ENCODE measurements at regions of chr2 and their contacts with region 1.

Region 1: DNA sequence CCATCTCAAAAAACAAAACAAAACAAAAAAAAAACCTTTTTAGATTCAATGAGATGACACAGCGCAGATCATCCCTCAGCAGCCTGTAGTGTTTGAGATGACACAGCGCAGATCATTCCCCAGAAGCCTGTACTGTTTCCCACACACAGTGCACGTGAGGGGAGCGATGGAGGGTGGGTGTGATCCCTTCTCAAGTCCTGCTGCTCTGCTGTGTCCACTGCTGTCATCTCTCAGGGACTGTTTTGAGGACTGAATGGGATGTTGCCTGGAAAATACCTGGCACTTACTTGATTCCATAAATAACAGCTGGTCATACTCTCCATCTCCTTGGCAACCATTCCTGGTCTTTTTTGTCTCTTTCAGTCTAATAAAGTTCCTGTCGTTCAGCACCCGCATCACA is 25.7 kb downstream of the TGOLN2 start:
- H3K4me3 ChIP-seq: no peak overlapping the region
- H3K27ac ChIP-seq: no peak overlapping the region
- H3K4me1 ChIP-seq: no peaks in the 10 kb centered on the region
- CTCF ChIP-seq: no peak

Region 2: DNA sequence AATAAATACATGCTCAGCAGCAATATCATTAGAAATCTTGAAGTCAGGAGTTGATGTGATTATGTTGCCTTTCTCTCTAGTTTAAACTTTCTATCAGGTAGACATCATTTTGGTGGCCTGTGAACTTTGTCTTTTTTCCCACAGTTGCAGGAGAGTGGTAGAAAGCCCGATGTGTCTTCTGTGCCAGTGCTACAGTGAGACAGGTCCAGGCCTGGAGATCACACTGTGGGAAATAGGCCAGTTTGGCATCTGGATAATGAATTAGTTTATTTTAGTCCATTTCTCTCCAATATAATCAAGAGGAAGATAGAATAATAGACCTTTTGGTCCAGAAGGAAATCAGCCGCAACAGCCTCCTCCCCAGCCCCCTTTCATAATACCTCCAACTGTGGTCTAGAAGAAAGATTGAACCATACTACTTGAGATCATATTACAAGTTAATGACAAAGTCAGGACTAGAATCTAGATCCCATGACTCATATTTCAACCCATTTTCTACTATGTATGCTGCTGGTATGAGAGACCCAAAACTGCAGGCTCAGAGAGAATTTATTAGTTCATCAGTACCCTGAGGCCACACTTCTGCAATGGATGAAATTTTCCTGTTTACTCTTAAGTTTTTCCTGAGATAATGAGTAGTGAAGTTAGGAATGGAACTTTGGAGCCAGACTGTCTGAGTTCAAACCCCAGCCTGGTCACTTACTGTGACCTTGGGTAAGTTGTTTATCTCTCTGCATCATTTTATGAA is 310.5 kb before region 1 on chr2:
- CTCF ChIA-PET with region 1: interaction called, 10 read pairs
- POLR2A ChIA-PET with region 1: no interaction called
- H3K4me3 ChIP-seq: no peak overlapping the region
- H3K27ac ChIP-seq: peak overlapping the region; percentile 3; the same call in 1 of the 2 replicates
- H3K4me1 ChIP-seq: peaks cover 30% of the 10 kb centered on the region
- CTCF ChIP-seq: no peak

Region 3: GRCh38 chr2:85273738-85274731 is 28.1 kb before region 1 on chr2:
- CTCF ChIA-PET with region 1: interaction called, 42 read pairs
- POLR2A ChIA-PET with region 1: no interaction called
- H3K4me3 ChIP-seq: no peak overlapping the region
- H3K27ac ChIP-seq: no peak overlapping the region
- H3K4me1 ChIP-seq: 0 out of 2 replicates have a peak, but pooled peaks cover 3% of the 10 kb centered on the region
- CTCF ChIP-seq: no peak

Region 4: DNA sequence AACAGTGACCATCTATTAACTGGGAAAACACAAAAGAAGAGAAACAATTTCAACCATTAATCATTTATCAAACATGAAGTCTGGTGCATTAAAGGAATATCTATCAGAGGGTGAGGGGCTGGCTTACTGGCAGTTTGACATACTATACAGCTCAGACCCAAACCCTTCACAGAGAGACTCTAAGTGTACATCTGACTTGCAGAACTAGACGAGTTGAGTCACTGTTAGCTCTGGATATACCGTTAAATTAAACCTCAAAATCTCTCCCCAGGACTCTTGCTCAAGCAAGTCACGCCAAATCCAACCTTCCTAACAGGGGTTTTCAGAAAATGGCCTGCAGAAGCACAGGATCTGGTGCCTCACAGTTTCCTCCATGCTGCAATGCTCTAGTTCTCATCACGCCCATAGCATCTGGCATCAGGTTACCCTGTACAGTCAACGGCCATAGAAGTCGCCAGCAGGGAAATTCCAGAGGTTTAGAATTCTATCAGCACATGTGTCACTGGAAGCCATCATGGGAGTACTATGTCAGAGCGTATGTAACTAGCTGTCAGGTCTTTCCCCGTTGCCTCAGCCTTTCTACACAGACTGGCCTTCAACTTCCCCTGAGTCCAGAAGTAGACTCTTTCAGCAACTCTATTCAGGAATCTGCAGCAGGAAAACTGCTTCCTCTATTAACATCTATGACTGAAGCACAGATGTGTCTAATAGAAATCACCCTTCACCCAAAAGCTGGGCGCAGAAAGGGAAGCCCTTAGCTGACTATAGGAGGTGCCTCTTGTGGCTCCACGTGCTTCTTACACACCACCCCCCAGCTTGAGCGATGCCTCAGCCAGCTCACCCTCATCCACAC is 16.3 kb after region 1 on chr2:
- CTCF ChIA-PET with region 1: interaction called, 14 read pairs
- POLR2A ChIA-PET with region 1: interaction called, 3 read pairs
- H3K4me3 ChIP-seq: no peak overlapping the region
- H3K27ac ChIP-seq: no peak overlapping the region
- H3K4me1 ChIP-seq: no peaks in the 10 kb centered on the region
- CTCF ChIP-seq: no peak

Region 5: GRCh38 chr2:85561317-85561979 is 259.3 kb after region 1 on chr2 and contains the start of gene GGCX:
- CTCF ChIA-PET with region 1: interaction called, 10 read pairs
- POLR2A ChIA-PET with region 1: no interaction called
- H3K4me3 ChIP-seq: peak within 1 kb of the TSS; percentile 80
- H3K27ac ChIP-seq: peak within 1 kb of the TSS; percentile 47
- H3K4me1 ChIP-seq: no peaks in the 10 kb centered on the region
- CTCF ChIP-seq: no peak; the same call in 1 of the 2 replicates

Measured in HEK293 (cell line).